A673 (cell line): ENCODE measurements at regions of chr9 and their contacts with region 1.

Region 1: DNA sequence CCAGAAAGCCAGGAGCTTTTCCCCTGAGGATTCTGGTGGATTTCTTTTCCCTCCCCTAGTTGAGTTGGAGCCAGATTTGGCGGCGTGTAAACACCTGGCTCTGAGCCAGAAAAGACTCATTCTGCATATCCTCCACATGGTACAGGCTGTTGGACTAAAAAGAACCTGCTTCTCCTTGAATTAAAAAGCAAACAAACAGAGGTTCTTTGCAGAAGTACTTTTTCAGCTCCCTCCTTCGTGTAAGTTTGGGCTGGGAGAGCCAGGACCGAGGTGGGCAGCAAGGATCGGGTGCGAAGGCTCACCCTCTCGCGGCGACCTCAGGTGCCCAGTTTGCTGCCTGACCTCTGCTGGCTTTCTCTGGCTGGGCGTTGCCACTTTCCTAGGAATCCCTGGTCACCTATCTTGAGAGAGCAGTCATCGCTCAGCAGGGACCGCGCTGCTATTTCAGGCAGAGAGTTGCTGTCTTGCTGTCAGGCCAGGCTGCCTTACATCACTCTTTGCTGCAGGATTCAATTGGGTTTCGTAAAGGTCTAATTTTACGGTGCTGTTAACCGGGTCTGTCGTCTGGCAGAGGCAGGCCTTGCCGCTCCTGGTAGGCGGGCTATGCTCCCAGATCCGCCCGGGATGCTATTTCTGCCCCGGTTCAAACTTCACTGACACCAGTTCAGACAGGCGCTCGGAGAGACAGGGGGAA is 3.2 kb downstream of the PAPPA start:
- DNase-seq: peak; percentile 92
- H3K4me3 ChIP-seq: peak overlapping the region; percentile 81
- H3K27ac ChIP-seq: peak overlapping the region; percentile 92
- H3K4me1 ChIP-seq: peaks cover 42% of the 10 kb centered on the region
- H3K27me3 ChIP-seq: no peaks in the 10 kb centered on the region
- CTCF ChIP-seq: no peak

Region 2: GRCh38 chr9:116234106-116234505 is 77.3 kb after region 1 on chr9:
- CTCF ChIA-PET with region 1: no interaction called
- POLR2A ChIA-PET with region 1: interaction called, 5 read pairs
- intact Hi-C with region 1: loop called (anchors 5 kb)
- DNase-seq: peak; percentile 95
- H3K4me3 ChIP-seq: no peak overlapping the region
- H3K27ac ChIP-seq: peak overlapping the region; percentile 53
- H3K4me1 ChIP-seq: peaks cover 33% of the 10 kb centered on the region
- H3K27me3 ChIP-seq: no peaks in the 10 kb centered on the region
- CTCF ChIP-seq: no peak